OCI-LY7 (cell line): ENCODE measurements at regions of chr12 and their contacts with region 1.

Region 1: GRCh38 chr12:14995583-14996425 is 23.0 kb downstream of the PDE6H start:
- DNase-seq: peak; percentile 81
- H3K4me3 ChIP-seq: no peak overlapping the region
- H3K27ac ChIP-seq: no peak overlapping the region
- H3K4me1 ChIP-seq: peaks cover 30% of the 10 kb centered on the region
- CTCF ChIP-seq: peak; percentile 97

Region 2: GRCh38 chr12:14723763-14724162 is 272.0 kb before region 1 on chr12:
- CTCF ChIA-PET with region 1: no interaction called
- POLR2A ChIA-PET with region 1: no interaction called
- intact Hi-C with region 1: loop called (anchors 2 kb)
- DNase-seq: peak; percentile 73
- H3K4me3 ChIP-seq: no peak overlapping the region
- H3K27ac ChIP-seq: no peak overlapping the region
- H3K4me1 ChIP-seq: no peaks in the 10 kb centered on the region
- CTCF ChIP-seq: peak; percentile 89

Region 3: DNA sequence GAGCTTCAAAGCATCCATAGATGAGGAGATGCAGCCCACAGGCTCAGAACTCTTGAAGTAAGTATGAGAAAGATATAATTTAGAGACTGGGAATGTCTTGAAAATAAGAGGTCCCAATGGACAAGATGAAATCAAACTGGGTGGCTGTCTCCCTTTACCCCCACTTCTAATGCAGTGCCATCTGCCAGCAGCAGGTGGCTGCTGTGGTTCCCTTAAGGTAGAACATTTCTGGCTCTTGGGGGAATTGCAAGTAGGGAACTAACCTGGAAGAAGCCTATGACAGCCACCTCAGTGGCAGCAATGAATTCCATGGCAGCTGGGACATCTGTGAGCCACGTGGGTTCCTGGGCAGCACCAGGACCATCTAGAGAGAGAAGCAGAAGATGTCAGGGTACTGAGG is 58.1 kb before region 1 on chr12:
- CTCF ChIA-PET with region 1: interaction called, 3 read pairs
- POLR2A ChIA-PET with region 1: no interaction called
- intact Hi-C with region 1: loop called (anchors 5 kb)
- DNase-seq: no peak
- H3K4me3 ChIP-seq: no peak overlapping the region
- H3K27ac ChIP-seq: no peak overlapping the region
- H3K4me1 ChIP-seq: peaks cover 5% of the 10 kb centered on the region
- CTCF ChIP-seq: peak; percentile 70

Region 4: DNA sequence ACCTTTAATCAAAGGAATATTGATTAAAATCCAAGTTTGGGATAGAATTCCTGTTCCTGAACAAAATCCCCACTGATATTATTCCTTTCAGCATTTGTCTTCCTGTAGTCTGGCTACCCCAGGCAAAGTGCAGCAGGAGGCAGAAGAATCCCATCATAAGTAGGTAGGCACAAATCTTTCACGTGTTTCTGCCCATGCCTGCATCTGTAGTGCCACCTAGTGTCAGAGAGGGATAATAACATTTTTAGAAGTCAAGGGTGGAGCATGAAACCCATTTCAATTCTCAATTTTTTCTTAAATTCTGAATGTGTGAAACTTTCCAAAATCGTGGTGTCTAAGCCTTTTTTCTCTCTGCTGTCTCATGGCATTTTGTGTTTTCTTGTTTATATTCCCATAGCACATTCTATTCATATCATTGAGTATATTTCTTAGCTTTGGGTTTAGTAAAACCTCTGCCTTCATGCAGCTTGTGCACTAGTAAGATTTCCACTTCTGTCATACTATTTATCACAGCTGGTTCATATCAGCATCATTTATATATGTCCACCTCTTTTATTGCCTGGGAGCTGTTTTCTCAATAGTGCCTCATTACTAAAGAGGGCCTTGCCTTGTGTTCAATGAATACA is 273.2 kb after region 1 on chr12:
- CTCF ChIA-PET with region 1: no interaction called
- POLR2A ChIA-PET with region 1: no interaction called
- intact Hi-C with region 1: loop called (anchors 2 kb)
- DNase-seq: peak; percentile 66
- H3K4me3 ChIP-seq: no peak overlapping the region
- H3K27ac ChIP-seq: no peak overlapping the region
- H3K4me1 ChIP-seq: no peaks in the 10 kb centered on the region
- CTCF ChIP-seq: peak; percentile 96

Region 5: GRCh38 chr12:15293731-15294130 is 297.9 kb after region 1 on chr12:
- CTCF ChIA-PET with region 1: no interaction called
- POLR2A ChIA-PET with region 1: no interaction called
- intact Hi-C with region 1: no loop called
- DNase-seq: no peak
- H3K4me3 ChIP-seq: no peak overlapping the region
- H3K27ac ChIP-seq: no peak overlapping the region
- H3K4me1 ChIP-seq: no peaks in the 10 kb centered on the region
- CTCF ChIP-seq: no peak